Esophagus muscularis mucosa (tissue), 4 donors: ENCODE measurements at regions of chr15 and their contacts with region 1.

Region 1: DNA sequence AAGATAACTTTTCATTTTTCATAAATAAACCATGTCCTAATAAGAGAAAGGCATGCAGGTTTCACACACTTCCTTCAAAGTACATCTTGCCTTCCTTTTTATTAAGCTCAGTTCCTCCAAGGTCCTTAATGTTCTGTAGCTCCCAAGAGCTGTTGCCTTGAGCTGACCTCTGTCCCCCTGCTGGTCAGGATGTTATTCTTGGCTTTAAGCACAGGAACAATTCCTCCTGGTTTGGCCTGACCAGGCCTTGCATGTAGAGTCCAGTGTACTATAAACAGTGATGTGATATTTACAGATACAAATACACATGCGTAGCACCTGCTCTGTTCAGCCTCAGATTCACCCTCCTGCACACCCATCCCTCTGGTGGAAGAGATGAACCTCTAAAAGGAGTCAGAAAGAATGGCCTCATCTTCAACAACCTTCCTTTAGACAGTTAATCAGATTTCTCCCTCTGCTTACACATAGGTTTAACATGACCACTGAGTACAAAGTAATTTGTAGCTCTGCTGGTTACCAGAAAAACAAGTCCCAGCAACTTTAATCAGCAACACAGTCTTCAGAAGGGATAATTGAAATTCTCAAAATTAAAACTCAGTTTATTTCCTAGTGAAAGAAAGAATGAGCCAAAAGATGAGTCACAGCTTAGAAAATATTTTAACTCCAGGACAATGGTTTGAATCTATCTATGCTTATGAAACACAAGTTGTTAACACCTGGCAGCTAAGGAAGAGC is 46.5 kb downstream of the PTPN9 start:
- DNase-seq: peak; percentile 94
- H3K4me3 ChIP-seq: peak overlapping the region in 1 of 4 donors; percentile 3
- H3K27ac ChIP-seq: peak overlapping the region; percentile 81 to 86 (median 84)
- H3K4me1 ChIP-seq: peaks cover 33 to 67% (median 62%) of the 10 kb centered on the region in 4 donors
- H3K27me3 ChIP-seq: no peaks in the 10 kb centered on the region
- CTCF ChIP-seq: peak; percentile 27 to 55 (median 42)
- EP300 ChIP-seq: peak; percentile 68
- POLR2A ChIP-seq: no peak

Region 2: GRCh38 chr15:75453703-75454470 is 78.7 kb before region 1 on chr15:
- intact Hi-C with region 1: no loop called
- DNase-seq: peak; percentile 99
- H3K4me3 ChIP-seq: peak overlapping the region; percentile 88 to 95 (median 92)
- H3K27ac ChIP-seq: peak overlapping the region; percentile 97 to 100 (median 100)
- H3K4me1 ChIP-seq: peaks cover 24 to 36% (median 31%) of the 10 kb centered on the region in 4 donors
- H3K27me3 ChIP-seq: no peaks in the 10 kb centered on the region
- CTCF ChIP-seq: no peak
- EP300 ChIP-seq: no peak
- POLR2A ChIP-seq: peak; percentile 50

Region 3: DNA sequence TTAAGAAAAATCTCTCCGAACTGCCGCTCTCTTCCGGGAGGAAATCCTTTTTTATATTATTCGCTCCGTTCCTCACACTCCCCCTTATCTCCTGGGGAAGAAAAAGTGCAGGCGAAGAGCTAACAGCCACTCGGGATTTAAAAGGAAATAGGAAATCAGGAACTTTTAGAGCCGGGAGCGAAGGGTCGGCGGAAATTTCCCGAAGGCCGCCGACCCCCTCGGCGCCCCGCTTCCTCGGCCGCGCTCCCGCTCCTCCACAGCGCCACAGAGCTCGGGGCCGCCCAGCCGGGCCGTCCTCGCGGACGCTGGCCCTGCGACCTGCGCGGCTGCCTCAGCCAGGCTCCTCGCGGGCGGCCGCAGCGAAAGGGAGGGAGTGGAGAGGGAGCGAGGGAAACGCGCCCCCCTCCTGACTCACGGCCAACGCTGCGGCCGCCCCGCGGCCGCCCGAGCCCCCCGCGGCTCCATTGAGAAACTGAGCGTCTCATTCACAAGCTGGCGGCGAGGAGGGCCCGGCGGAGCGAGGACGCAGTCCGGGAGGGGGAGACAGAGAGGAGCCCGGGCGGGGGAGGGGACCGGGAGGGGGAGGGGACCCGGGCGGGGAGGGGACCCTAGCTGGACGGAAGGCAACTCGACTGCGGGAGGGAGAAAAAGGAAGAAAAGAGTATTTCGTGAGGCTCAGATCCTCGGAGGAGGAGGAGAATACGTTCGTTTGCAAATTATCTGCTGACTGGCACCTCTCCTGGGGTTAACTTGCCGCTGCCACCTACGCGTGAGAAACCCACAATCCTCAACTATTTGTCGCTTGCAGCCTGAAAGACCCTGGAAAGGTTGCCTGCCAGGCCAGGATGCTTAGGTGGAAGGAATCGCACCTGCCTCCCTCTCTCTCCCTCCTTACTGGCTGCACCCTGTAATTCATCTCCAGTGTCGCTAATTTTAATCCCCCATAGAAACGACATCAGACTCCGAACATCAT is 46.7 kb after region 1 on chr15 and contains the start of gene PTPN9:
- intact Hi-C with region 1: loop called (anchors 5 kb)
- DNase-seq: peak; percentile 93
- H3K4me3 ChIP-seq: peak within 1 kb of the TSS; percentile 74 to 94 (median 88)
- H3K27ac ChIP-seq: peak within 1 kb of the TSS; percentile 86 to 93 (median 92)
- H3K4me1 ChIP-seq: peaks cover 17 to 43% (median 37%) of the 10 kb centered on the region in 4 donors
- H3K27me3 ChIP-seq: no peaks in the 10 kb centered on the region
- CTCF ChIP-seq: peak; percentile 26 to 70 (median 44)
- EP300 ChIP-seq: no peak
- POLR2A ChIP-seq: no peak
- total RNA-seq, gene PTPN9: 20.3 to 31.6 (median 27.5) TPM